ENCODE measurements at regions of chr1 and their contacts with region 1.

Region 1: DNA sequence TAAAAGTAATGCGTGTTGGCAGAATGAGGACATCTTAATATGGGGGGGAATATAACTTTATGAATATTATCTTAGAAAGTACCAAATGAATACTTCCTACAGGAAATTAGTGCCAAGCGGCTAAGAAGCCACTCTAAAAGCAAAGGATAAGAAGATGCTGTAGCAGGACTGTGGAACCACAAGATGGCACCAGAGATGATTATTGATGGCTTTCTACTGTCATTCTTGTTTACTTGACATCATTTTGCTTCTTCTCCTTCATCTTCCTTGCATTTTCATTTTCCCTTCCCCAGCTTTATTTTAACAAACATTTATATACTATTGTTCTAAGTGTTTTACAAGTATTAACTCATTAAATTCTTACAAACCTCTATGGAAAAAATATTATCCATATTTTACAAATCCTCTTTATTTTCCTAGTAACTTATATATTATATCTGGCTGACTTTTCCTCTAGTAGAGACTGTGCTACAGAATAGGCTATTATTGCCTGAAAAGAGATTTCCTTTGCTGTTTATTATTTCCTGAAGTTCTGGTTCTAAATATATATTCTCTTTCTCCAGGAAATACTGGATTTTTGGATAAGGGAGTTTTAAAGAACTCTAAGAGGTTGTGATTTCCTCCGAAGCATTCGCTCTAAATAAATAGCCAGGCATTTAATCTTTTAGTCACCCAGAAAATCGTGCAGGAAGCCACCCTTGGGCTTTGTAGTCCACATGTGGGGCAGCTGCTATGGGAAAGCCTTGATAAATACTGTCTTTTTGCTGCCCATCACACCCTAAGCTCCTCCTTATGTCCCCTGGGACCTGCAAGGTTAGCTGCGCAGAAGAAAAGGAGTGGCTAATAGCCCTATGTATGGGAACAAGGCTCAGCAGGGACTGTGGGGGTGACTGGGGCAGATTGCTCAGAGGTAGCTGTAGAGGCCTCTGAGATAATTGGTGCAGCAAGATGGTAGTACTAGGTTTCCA is 69.8 kb downstream of the TPR start:
- DNase-seq: peak; percentile 44
- ATAC-seq: peak; percentile 63
- H3K4me3 Mint-ChIP-seq: no peak overlapping the region
- H3K27ac Mint-ChIP-seq: no peak overlapping the region
- H3K4me1 Mint-ChIP-seq: peaks cover 40% of the 10 kb centered on the region
- H3K27me3 Mint-ChIP-seq: no peaks in the 10 kb centered on the region

Region 2: DNA sequence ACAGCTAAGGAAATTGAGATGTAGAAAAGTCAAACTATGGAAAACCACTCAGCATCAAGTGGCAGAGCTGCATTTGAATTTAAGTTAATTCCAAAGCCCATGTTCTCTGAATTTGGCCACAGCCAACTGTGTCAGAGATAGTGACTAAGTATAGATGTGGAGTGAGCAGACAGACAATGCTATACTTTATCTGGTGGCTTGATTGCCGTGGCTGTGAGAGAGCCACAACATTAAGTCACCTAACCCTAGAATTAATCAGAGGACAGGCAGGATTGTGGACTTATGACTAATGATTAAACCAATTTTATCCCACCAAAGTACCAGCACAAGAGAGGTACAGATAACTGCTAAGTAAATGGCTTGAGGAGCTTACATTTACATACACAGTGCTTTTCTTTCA is 140.0 kb before region 1 on chr1:
- CTCF ChIA-PET with region 1: no interaction called
- POLR2A ChIA-PET with region 1: no interaction called
- DNase-seq: no peak
- ATAC-seq: no peak
- H3K4me3 Mint-ChIP-seq: no peak overlapping the region
- H3K27ac Mint-ChIP-seq: no peak overlapping the region
- H3K4me1 Mint-ChIP-seq: no peaks in the 10 kb centered on the region
- H3K27me3 Mint-ChIP-seq: peaks cover 3% of the 10 kb centered on the region

Region 3: DNA sequence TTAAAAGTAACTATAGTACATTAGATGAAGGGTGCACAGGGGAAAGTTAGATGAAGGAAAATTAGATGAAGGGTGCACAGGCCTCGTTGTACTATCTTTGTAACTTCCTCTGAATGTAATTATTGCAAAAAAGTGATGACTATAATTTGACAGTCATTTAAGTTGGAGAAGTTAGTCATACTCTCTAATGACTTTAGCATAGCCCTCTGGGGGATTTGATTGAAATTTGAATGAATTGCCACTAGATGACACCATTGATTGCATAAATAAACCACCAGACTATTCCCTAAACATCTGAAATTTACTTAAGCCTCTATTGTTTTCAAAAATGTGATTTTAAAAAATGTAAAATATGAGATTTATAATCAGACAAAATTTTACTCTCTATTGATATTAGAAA is 32.8 kb before region 1 on chr1:
- CTCF ChIA-PET with region 1: interaction called, 17 read pairs
- POLR2A ChIA-PET with region 1: interaction called, 3 read pairs
- DNase-seq: no peak
- ATAC-seq: no peak
- H3K4me3 Mint-ChIP-seq: no peak overlapping the region
- H3K27ac Mint-ChIP-seq: no peak overlapping the region
- H3K4me1 Mint-ChIP-seq: no peaks in the 10 kb centered on the region
- H3K27me3 Mint-ChIP-seq: peaks cover 2% of the 10 kb centered on the region

Region 4: DNA sequence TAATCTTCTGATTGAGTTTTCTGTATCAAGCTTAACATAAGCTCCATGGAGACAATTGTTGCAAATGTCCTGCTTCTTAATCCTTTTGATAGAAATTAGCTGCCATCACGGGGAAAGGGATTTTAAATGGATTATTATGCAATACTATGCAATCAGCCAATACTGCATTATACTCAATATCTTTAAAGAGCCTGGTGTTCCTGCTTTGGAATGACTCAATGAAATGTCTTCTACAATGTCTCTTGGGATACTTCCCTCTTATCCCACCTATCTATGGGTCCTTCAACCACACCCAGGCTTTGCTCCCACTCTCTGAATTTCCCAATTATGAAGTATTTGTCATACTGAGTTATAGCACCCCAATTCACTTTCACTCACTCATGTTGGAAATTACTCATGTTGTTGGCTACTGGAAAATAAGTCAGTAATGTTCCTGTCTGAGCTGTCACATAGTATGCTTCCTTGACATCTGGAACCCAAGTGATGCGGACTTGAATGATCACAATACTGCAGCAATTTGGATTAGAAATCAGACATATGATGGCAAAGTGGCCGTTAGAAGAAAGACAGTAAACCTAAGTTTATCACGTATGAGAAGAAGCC is 15.2 kb before region 1 on chr1:
- CTCF ChIA-PET with region 1: interaction called, 37 read pairs
- POLR2A ChIA-PET with region 1: interaction called, 5 read pairs
- DNase-seq: no peak
- ATAC-seq: no peak
- H3K4me3 Mint-ChIP-seq: no peak overlapping the region
- H3K27ac Mint-ChIP-seq: no peak overlapping the region
- H3K4me1 Mint-ChIP-seq: peaks cover 28% of the 10 kb centered on the region
- H3K27me3 Mint-ChIP-seq: no peaks in the 10 kb centered on the region

Region 5: GRCh38 chr1:186315570-186315969 is 10.3 kb after region 1 on chr1:
- CTCF ChIA-PET with region 1: interaction called, 20 read pairs
- POLR2A ChIA-PET with region 1: interaction called, 5 read pairs
- DNase-seq: no peak
- ATAC-seq: no peak
- H3K4me3 Mint-ChIP-seq: no peak overlapping the region
- H3K27ac Mint-ChIP-seq: no peak overlapping the region
- H3K4me1 Mint-ChIP-seq: no peaks in the 10 kb centered on the region
- H3K27me3 Mint-ChIP-seq: no peaks in the 10 kb centered on the region

Region 6: GRCh38 chr1:186325239-186325638 is 20.0 kb after region 1 on chr1:
- CTCF ChIA-PET with region 1: interaction called, 20 read pairs
- POLR2A ChIA-PET with region 1: interaction called, 3 read pairs
- DNase-seq: no peak
- ATAC-seq: no peak
- H3K4me3 Mint-ChIP-seq: no peak overlapping the region
- H3K27ac Mint-ChIP-seq: no peak overlapping the region
- H3K4me1 Mint-ChIP-seq: peaks cover 10% of the 10 kb centered on the region
- H3K27me3 Mint-ChIP-seq: no peaks in the 10 kb centered on the region

Region 7: GRCh38 chr1:186375088-186375953 is 70.1 kb after region 1 on chr1 and contains the starts of genes ODR4 and TPR:
- CTCF ChIA-PET with region 1: interaction called, 16 read pairs
- POLR2A ChIA-PET with region 1: interaction called, 3 read pairs
- DNase-seq: peak; percentile 98
- ATAC-seq: peak; percentile 89
- H3K4me3 Mint-ChIP-seq: peak within 1 kb of the TSS; percentile 97
- H3K27ac Mint-ChIP-seq: peak within 1 kb of the TSS; percentile 94
- H3K4me1 Mint-ChIP-seq: peaks cover 33% of the 10 kb centered on the region
- H3K27me3 Mint-ChIP-seq: no peaks in the 10 kb centered on the region
- total RNA-seq, gene ODR4: 12.1 to 12.8 TPM
- total RNA-seq, gene TPR: 131 to 143 TPM

Measured in activated CD8-positive, alpha-beta T cell treated with anti-CD3 and anti-CD28 coated beads, Interleukin-2, amount 10 ng/mL, durations not matched to agents 7 days and 5 days (primary cell).